ENCODE measurements at regions of chr11 and their contacts with region 1.

Region 1: DNA sequence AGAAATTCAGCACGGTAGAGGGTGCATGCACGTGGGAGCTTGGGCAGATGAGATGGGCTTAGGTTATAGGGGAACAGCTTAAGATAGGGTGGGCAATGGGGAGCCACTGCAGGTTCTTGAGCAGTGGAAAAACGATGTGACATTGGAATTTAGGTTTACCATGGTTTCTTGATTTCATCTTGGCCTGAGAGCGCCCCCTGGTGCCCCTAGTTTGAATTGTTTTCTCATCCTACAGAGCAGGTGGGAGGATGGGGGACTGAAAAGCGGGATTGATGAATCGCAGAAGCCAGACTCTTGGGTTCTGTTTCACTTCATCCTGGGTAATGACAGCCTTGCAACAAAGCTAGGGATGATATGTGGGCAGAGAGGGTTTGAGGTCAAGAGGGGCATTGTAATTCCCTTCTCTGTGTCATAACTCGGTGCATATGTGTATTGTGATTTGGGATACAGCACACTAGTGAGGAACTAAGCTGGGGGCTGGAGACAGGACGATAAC is 6.7 kb upstream of the MCAM start:
- DNase-seq: peak; percentile 64
- CTCF ChIP-seq: peak; percentile 89

Region 2: DNA sequence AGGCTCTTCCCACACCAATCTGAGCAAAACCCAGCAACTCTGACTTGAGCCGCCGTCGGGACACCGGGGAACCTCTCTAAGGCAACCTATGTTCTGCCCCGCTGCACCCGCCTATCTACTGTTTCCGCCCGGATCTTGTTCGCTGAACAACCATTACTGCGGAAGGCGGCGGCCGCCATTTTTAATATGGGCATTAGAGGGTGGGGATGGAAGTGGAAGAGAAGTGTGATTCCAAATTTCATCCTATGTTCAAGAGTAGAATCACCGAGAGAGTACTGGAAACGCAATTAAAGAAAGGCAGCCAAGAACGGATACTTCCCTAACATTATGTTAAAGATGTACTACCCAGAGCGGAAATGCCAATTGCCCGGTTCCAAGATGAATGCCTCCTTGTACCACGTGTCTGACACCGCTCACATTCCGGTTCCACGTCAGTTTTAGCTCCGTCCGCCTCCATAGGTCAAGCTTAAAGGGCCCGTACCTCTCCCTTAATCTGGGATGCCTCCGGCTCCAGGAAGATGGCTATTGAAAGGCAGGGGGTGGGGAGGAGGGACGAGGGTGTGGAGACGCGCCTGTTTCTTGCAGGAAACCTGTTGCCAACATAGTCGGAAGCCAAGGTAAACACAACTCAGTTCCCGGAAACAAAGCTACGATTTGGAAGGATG is 221.7 kb before region 1 on chr11 and contains the start of gene DPAGT1:
- CTCF ChIA-PET with region 1: interaction called, 11 read pairs
- POLR2A ChIA-PET with region 1: no interaction called
- DNase-seq: peak; percentile 80
- CTCF ChIP-seq: no peak

Region 3: DNA sequence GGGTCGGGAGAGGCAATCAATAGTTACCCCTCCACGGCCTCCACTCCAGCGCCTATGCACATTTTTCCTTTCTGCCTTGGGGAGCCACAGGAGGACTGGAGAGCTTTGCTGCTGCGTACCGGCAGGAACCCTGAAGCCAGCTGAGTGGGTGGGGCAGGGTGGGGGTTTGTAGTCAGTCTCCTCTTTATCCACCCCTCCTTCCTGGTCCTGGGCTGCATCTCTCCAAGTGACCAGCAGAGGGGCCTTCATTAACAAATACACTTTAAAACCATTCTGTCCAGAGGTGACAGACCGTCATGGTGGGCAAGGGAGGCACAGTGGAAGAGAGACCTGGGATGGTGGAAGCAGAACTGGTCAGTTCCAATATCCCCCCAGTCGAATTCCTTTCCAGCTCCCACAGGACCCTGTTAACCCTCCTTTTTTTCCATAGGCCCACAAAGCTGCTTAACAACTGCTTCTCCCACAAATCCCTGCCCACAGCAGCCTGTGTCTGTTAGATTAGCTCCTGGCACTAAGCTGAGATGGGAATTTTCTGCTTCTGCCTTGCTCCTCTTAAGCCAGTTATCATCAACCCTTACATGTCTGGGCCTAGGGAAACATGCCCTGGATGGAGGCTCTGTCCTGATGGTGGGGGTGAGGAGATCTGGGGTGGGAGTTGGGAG is 178.6 kb before region 1 on chr11:
- CTCF ChIA-PET with region 1: interaction called, 17 read pairs
- POLR2A ChIA-PET with region 1: no interaction called
- DNase-seq: peak; percentile 82
- CTCF ChIP-seq: peak; percentile 61

Region 4: GRCh38 chr11:119284344-119285157 is 39.0 kb before region 1 on chr11:
- CTCF ChIA-PET with region 1: interaction called, 13 read pairs
- POLR2A ChIA-PET with region 1: no interaction called
- DNase-seq: peak; percentile 68
- CTCF ChIP-seq: peak; percentile 59

Region 5: DNA sequence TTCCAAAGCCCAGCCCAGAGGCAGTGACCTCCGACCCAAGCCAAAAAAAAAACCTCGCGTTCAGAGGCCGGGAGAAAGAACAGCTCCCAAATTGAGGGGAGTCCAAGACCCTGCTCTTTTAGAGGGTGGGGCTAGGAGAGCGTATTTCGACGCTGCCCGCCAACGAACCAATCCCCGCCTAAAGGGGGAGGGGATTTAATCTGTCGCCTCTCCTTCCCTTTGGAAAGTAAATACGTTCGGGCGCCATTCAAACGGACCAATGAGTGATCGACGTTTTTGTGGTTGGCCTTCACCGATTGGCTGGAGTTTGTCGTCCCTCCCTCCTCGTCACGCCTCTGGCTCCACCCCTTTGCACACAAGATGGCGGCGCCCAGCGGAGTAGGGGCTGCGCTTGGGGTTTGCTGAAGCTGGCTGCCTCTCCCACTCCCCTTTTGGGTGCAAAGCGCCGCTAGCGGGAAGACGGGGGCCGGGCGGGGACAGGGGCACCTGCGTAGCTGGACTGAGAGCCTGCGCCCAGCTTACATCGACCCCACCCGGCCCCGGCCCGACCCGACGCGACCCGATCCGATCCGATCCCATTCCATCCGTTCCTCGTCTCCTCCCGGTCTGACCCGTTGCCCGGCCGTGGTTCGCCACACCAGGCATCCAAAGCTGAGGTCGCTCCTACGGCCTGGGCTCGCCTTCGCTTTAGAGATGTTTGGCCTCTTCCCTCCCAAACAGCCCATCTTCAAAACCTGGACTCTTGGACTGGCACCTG is 10.8 kb after region 1 on chr11 and contains the start of gene RNF26:
- CTCF ChIA-PET with region 1: interaction called, 131 read pairs
- POLR2A ChIA-PET with region 1: no interaction called
- DNase-seq: peak; percentile 99
- CTCF ChIP-seq: no peak

Region 6: GRCh38 chr11:119373921-119374631 is 50.5 kb after region 1 on chr11:
- CTCF ChIA-PET with region 1: interaction called, 12 read pairs
- POLR2A ChIA-PET with region 1: no interaction called
- DNase-seq: peak; percentile 63
- CTCF ChIP-seq: peak; percentile 84

Region 7: GRCh38 chr11:119491753-119492510 is 168.3 kb after region 1 on chr11:
- CTCF ChIA-PET with region 1: no interaction called
- POLR2A ChIA-PET with region 1: no interaction called
- DNase-seq: no peak
- CTCF ChIP-seq: no peak

Measured in GM10248 (cell line).